ENCODE measurements at regions of chr10 and their contacts with region 1.

Region 1: DNA sequence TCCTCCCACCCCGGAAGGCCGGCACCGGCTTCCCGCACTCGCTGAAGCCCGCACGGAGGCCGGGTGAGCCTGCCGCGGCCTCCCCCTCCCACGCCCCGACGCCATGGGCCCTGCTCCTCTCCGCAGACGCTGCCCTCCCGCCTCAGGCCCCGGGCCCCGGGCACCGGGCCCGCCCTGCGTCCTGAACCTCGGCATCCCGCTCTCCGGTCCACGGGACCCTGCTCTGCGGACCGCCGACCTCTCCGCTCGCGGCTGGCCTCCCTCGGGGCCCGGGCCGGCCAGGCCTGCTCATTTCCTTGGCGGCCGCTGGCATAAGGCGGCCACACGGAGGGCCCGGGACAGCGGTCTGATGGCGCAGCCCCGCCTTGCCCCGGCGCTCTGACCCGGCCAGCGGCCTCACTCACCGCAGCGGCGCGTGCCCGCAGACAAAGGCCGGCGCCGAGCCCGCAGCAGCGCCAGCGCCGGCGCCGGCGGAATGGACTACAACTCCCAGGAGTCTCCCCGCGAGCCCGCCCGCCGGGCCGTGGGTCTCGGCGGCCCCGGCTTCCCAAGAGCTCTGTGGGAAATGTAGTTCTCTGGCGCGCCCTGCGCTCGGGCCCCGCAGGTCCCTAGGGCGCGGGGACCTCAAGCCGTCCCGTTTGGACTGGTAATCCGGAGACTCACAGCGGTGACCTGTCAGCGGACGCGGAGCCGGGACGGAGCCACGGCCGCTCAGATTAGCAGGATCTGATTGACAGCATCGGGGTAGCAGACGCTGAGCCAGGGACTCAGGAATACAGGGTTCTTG is at the start of gene ZNF32:
- DNase-seq: peak; percentile 60 to 89 (median 79)
- ATAC-seq: peak; percentile 97
- H3K4me3 ChIP-seq: peak within 1 kb of the TSS; percentile 74 to 92
- H3K4me3 Mint-ChIP-seq: peak within 1 kb of the TSS; percentile 97
- H3K27ac ChIP-seq: peak within 1 kb of the TSS; percentile 48 to 80
- H3K27ac Mint-ChIP-seq: peak within 1 kb of the TSS; percentile 92
- H3K4me1 ChIP-seq: peaks cover 14% of the 10 kb centered on the region
- H3K4me1 Mint-ChIP-seq: peaks cover 23% of the 10 kb centered on the region
- H3K27me3 ChIP-seq: no peaks in the 10 kb centered on the region
- H3K27me3 Mint-ChIP-seq: peaks cover 1% of the 10 kb centered on the region
- CTCF ChIP-seq: no peak
- total RNA-seq, gene ZNF32: 17.4 to 18.9 TPM

Region 2: GRCh38 chr10:43574001-43574892 is 74.3 kb before region 1 on chr10 and contains the start of gene ZNF239:
- CTCF ChIA-PET with region 1: no interaction called
- POLR2A ChIA-PET with region 1: interaction called, 18 read pairs
- intact Hi-C with region 1: loop called (anchors 1 kb)
- DNase-seq: peak; percentile 62 to 93 (median 82)
- ATAC-seq: peak; percentile 88
- H3K4me3 ChIP-seq: peak within 1 kb of the TSS; percentile 43 to 63
- H3K4me3 Mint-ChIP-seq: peak within 1 kb of the TSS; percentile 85
- H3K27ac ChIP-seq: peak within 1 kb of the TSS; percentile 38 to 66
- H3K27ac Mint-ChIP-seq: peak within 1 kb of the TSS; percentile 90
- H3K4me1 ChIP-seq: peaks cover 25% of the 10 kb centered on the region
- H3K4me1 Mint-ChIP-seq: peaks cover 51% of the 10 kb centered on the region
- H3K27me3 ChIP-seq: no peaks in the 10 kb centered on the region
- H3K27me3 Mint-ChIP-seq: no peaks in the 10 kb centered on the region
- CTCF ChIP-seq: no peak
- total RNA-seq, gene ZNF239: 0.75 to 1.1 TPM

Region 3: DNA sequence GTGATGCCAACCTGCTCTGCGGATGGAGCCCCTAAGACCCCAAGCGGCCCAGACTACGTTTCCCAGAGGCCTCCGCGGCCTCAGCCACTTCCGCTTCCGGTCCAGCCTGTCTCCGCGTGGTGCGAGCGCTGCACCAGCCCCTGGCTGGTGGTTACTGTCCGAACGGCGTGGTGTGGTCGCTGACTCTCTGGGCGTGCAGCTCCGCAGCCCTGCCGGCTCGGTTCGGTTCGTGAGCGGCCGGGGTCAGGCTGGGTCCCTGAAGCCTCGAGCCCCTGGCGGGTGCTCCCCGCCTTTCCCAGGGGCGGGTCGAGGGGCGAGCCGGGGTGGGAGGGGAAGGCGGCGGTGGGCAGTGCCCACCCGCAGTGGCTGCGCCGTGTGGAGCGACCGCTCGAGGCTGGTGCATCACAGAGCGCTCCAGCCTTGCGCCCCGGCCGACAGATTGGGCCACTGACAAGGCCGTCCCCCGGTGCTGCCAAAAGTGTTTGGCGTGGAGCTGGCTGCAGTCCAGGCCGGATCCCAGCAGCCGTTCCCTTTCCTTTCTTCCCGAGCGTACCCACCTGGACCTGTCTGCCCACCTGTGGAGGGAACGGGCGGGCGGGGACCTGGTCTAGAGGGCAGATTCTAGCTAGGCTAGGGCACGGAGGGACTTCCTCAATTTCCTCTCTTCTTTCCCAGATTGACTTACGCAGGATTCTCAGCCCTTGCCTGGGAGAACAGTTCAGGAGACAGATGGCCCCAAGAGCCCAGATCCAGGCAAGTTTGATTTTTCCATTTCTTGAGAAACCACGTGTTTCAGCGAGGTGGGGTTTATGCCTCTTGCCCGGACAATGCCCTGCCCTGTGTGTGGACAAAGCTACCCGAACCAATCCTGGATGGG is 42.0 kb before region 1 on chr10 and contains the start of gene ZNF485:
- CTCF ChIA-PET with region 1: interaction called, 4 read pairs
- POLR2A ChIA-PET with region 1: interaction called, 3 read pairs
- intact Hi-C with region 1: loop called (anchors 1 kb)
- DNase-seq: peak; percentile 21 to 82 (median 67)
- ATAC-seq: peak; percentile 92
- H3K4me3 ChIP-seq: peak within 1 kb of the TSS; percentile 62 to 71
- H3K4me3 Mint-ChIP-seq: peak within 1 kb of the TSS; percentile 84
- H3K27ac ChIP-seq: peak within 1 kb of the TSS; percentile 10 to 18
- H3K27ac Mint-ChIP-seq: peak within 1 kb of the TSS; percentile 81
- H3K4me1 ChIP-seq: peaks cover 15% of the 10 kb centered on the region
- H3K4me1 Mint-ChIP-seq: peaks cover 33% of the 10 kb centered on the region
- H3K27me3 ChIP-seq: no peaks in the 10 kb centered on the region
- H3K27me3 Mint-ChIP-seq: no peaks in the 10 kb centered on the region
- CTCF ChIP-seq: no peak
- total RNA-seq, gene ZNF485: 0.92 to 1.2 TPM

Region 4: DNA sequence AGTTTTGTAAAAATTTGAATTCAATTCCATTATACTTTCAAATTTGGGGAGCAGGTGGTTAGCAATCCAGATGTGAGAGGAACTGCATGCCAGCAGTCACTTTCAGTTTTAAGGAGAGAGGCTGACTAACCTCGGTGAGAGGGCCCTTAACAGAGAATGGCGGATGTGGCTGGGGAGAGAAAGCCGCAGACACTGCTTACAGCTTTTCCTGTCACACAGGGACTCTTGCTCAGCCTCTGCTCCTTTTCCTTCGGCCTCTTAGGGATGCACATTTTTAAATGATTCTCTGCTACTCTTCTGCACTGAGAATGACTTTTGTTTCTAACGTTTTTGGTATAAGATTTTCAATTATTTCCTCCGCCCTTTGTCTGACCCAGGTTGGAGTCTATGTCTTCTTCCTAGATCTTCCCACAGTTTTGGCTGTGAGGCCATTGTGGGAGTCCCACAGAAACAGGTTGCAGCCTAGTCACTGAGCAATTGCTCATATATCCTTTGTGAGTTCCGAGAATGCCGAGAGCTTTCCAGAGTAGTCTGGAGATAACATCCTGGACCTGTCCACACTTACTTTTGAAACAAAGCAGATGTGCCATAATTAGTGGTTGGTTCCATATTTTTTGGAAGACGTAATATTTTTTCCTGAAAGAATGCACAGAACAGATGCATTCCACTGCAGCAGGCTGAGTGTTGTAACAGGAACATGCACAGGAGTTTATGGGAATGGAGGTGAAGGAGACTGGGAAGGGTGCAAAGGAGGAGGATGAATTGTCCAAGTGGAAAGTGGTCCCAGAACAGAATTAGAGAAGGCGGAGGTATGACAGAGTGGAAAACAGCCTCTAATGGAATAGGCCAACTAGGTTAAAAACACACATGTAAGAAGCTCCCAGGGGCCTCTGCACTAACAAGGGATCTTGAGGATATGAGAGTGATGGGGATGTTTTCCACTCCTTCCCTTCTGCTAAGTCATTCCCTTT is 168.0 kb after region 1 on chr10:
- CTCF ChIA-PET with region 1: no interaction called
- POLR2A ChIA-PET with region 1: no interaction called
- intact Hi-C with region 1: loop called in 1 of 2 experiments (anchors 2 kb)
- DNase-seq: peak; percentile 23 to 86 (median 77)
- ATAC-seq: peak; percentile 94
- H3K4me3 ChIP-seq: peak overlapping the region in 1 of 2 experiments; percentile 2
- H3K4me3 Mint-ChIP-seq: peak overlapping the region; percentile 65
- H3K27ac ChIP-seq: peak overlapping the region in 1 of 2 experiments; percentile 36
- H3K27ac Mint-ChIP-seq: peak overlapping the region; percentile 80
- H3K4me1 ChIP-seq: peaks cover 26% of the 10 kb centered on the region
- H3K4me1 Mint-ChIP-seq: peaks cover 45% of the 10 kb centered on the region
- H3K27me3 ChIP-seq: no peaks in the 10 kb centered on the region
- H3K27me3 Mint-ChIP-seq: no peaks in the 10 kb centered on the region
- CTCF ChIP-seq: no peak

Measured in CD8-positive, alpha-beta T cell (primary cell).